Testis (tissue), 5 donors: ENCODE measurements at regions of chr19 and their contacts with region 1.

Region 1: GRCh38 chr19:13842401-13843103 is 34.4 kb upstream of the NANOS3 start:
- DNase-seq: peak; percentile 83
- H3K4me3 ChIP-seq: peak overlapping the region; percentile 86 to 88
- H3K27ac ChIP-seq: peak overlapping the region; percentile 95 to 99
- H3K4me1 ChIP-seq: peaks cover 35% of the 10 kb centered on the region
- H3K27me3 ChIP-seq: no peaks in the 10 kb centered on the region
- CTCF ChIP-seq: no peak
- POLR2A ChIP-seq: no peak

Region 2: GRCh38 chr19:13794757-13795589 is 47.6 kb before region 1 on chr19 and contains the start of gene ZSWIM4:
- intact Hi-C with region 1: loop called (anchors 5 kb)
- DNase-seq: peak; percentile 100
- H3K4me3 ChIP-seq: peak within 1 kb of the TSS; percentile 64 to 86
- H3K27ac ChIP-seq: peak within 1 kb of the TSS; percentile 27 to 89
- H3K4me1 ChIP-seq: peaks cover 18% of the 10 kb centered on the region
- H3K27me3 ChIP-seq: no peaks in the 10 kb centered on the region
- CTCF ChIP-seq: no peak
- POLR2A ChIP-seq: no peak
- total RNA-seq, gene ZSWIM4: 4.7 to 10.0 TPM

Region 3: DNA sequence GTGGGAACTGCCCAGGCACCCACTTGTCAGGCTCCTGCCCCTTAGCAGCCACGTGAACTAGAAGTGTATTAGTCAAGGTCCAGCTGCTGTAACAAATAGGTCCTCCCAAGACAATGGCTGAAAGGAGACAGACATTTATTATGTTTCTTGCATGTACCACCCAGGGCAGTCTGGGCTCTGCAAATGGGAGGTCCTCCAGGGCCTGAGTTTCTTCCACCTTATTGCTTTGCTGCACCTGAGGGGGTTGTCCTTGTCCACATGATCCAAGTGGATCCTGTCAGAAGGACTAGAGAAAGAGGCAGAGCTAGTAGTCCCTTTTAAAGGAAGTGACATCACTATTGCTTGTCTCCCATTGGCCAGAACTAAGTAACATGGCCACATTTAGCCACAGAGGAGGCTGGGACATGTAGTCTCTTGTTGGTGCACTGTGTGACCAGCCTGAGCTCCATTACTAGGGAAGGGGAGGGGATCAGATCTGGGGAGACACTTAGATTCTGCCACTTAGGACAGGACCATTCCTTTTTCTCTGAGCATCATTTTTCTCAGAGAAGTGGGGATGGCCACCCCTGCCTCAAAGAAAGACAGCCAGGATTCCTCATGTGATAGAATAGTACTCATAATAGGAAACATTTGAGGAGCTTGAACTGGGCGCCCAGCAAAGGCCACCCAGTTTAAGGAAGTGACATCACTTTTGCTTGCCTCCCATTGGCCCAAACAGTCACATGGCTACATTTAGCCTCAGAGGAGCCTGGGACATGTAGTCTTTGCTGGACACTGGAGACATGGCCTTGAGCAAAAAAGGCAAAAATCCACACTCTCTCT is 78.6 kb after region 1 on chr19:
- intact Hi-C with region 1: no loop called
- DNase-seq: peak; percentile 78
- H3K4me3 ChIP-seq: no peak overlapping the region
- H3K27ac ChIP-seq: no peak overlapping the region
- H3K4me1 ChIP-seq: no peaks in the 10 kb centered on the region
- H3K27me3 ChIP-seq: no peaks in the 10 kb centered on the region
- CTCF ChIP-seq: no peak
- POLR2A ChIP-seq: no peak